HCT116 (cell line): ENCODE measurements at regions of chr2 and their contacts with region 1.

Region 1: GRCh38 chr2:188524519-188525113 is 232.9 kb downstream of the GULP1 start:
- DNase-seq: peak; percentile 22
- ATAC-seq: no peak
- H3K4me3 ChIP-seq: no peak overlapping the region
- H3K27ac ChIP-seq: no peak overlapping the region
- H3K4me1 ChIP-seq: no peaks in the 10 kb centered on the region
- H3K27me3 ChIP-seq: no peaks in the 10 kb centered on the region
- CTCF ChIP-seq: peak; percentile 54 to 64 (median 56); a peak in 5 of 6 replicates
- POLR2A ChIP-seq: no peak
- RAD21 ChIP-seq: peak; percentile 77

Region 2: DNA sequence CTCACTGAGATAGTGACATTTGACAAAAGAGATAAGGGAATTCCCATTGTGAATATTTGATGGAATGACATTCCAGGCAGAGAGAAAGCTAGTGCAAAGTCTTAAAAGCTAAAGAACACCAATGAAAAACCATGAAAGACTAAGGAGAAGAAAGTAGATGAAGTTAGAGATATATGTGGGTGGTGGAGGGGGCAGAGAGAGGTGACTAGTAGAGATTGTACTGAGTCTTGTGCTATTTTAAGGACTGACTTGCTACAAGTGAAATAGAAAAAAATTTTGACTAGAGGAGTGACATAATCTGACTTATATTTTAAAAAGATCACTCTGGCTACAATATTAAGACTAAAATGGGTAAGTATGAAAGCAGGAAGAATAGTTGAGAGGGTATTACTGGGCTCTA is 268.2 kb before region 1 on chr2:
- CTCF ChIA-PET with region 1: no interaction called
- POLR2A ChIA-PET with region 1: no interaction called
- RAD21 ChIA-PET with region 1: no interaction called
- intact Hi-C with region 1: no loop called
- DNase-seq: no peak
- ATAC-seq: no peak
- H3K4me3 ChIP-seq: no peak overlapping the region
- H3K27ac ChIP-seq: no peak overlapping the region
- H3K4me1 ChIP-seq: no peaks in the 10 kb centered on the region
- H3K27me3 ChIP-seq: no peaks in the 10 kb centered on the region
- CTCF ChIP-seq: no peak
- POLR2A ChIP-seq: no peak
- RAD21 ChIP-seq: no peak

Region 3: GRCh38 chr2:188360485-188361255 is 163.9 kb before region 1 on chr2:
- CTCF ChIA-PET with region 1: no interaction called
- POLR2A ChIA-PET with region 1: no interaction called
- RAD21 ChIA-PET with region 1: no interaction called
- intact Hi-C with region 1: no loop called
- DNase-seq: no peak
- ATAC-seq: no peak
- H3K4me3 ChIP-seq: no peak overlapping the region
- H3K27ac ChIP-seq: no peak overlapping the region
- H3K4me1 ChIP-seq: no peaks in the 10 kb centered on the region
- H3K27me3 ChIP-seq: no peaks in the 10 kb centered on the region
- CTCF ChIP-seq: no peak
- POLR2A ChIP-seq: no peak
- RAD21 ChIP-seq: no peak

Region 4: GRCh38 chr2:188788621-188789020 is 264.0 kb after region 1 on chr2:
- CTCF ChIA-PET with region 1: no interaction called
- POLR2A ChIA-PET with region 1: no interaction called
- RAD21 ChIA-PET with region 1: no interaction called
- intact Hi-C with region 1: loop called (anchors 10 kb)
- DNase-seq: peak; percentile 57
- ATAC-seq: peak; percentile 59
- H3K4me3 ChIP-seq: peak overlapping the region in 1 of 2 experiments; percentile 23; a peak in 1 of 4 replicates
- H3K27ac ChIP-seq: no peak overlapping the region
- H3K4me1 ChIP-seq: peaks cover 17 to 33% of the 10 kb centered on the region in 2 experiments
- H3K27me3 ChIP-seq: no peaks in the 10 kb centered on the region
- CTCF ChIP-seq: no peak
- POLR2A ChIP-seq: no peak
- RAD21 ChIP-seq: no peak

Region 5: DNA sequence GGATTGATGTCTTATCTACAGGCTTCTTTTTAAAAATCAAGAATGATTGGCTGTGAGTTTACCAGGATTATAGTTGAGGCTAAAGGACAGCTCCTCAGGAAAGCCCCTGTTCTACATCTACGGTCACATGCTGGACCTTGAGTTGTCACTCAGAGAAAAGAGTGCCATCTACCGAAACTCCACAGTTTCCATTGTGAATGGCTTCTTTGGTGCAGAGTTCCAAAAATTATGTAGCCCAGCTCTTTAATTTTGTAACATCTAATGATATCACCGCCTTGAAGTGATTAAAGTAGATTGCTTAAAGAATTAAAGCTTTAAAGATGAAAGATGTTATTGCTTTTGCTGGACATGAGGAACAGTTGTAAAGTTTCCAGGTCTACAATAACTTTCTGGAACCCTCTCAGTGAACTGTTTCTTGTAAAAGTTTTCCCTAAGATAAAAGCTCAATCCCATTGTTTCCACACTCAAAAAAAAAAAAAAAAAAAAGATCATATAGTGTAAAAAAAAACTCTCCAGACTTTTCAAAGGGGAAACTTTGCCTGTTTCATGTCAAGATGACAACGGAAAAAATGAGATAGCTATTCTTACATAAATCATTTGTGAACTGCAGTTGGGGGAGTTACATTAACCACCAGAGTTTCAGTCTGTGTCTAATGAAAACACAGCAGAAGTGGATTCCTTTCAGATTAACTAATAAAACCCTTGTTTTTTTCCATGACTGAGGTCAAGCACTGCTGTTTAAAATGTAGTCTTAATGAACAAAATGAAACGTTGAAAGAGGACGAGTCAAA is 453.9 kb after region 1 on chr2:
- CTCF ChIA-PET with region 1: interaction called, 96 read pairs
- POLR2A ChIA-PET with region 1: no interaction called
- RAD21 ChIA-PET with region 1: interaction called, 7 to 8 read pairs
- intact Hi-C with region 1: loop called (anchors 2 kb)
- DNase-seq: peak; percentile 31
- ATAC-seq: peak; percentile 92
- H3K4me3 ChIP-seq: no peak overlapping the region; a peak in 1 of 4 replicates
- H3K27ac ChIP-seq: no peak overlapping the region
- H3K4me1 ChIP-seq: peaks cover 0 to 18% of the 10 kb centered on the region in 2 experiments; a peak in 2 of 4 replicates
- H3K27me3 ChIP-seq: no peaks in the 10 kb centered on the region
- CTCF ChIP-seq: peak; percentile 42 to 57 (median 46); a peak in 4 of 6 replicates
- POLR2A ChIP-seq: no peak
- RAD21 ChIP-seq: peak; percentile 78

Region 6: DNA sequence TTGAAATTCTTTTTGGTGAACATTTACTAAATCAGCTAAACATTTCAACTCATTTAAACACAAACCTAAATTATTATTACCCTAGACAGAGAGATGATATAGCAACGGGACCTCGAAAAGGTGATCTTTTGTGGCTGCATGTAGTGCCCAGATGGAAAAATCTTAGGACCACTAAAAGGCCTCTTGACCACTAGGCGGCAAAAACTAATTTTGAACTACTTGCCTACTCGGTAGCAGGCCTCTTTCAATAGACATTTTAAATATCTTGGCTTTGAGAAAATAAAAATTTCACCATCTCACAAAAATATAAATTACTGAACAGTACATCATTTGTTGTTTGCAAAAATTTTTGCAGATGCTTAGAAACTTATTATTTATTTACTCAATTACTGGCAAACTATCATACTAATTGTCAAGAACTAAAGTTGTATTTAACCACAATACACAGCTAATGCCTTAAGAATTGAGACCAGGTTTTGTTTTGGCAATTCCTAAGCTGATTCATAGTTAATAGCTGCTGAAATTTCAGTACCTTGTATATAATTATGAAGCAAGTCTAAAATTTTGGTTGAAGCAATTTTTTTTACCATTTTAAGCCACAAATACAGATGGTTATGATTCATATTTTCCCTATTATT is 458.9 kb after region 1 on chr2:
- CTCF ChIA-PET with region 1: interaction called, 96 read pairs
- POLR2A ChIA-PET with region 1: no interaction called
- RAD21 ChIA-PET with region 1: interaction called, 7 to 8 read pairs
- intact Hi-C with region 1: loop called (anchors 2 kb)
- DNase-seq: peak; percentile 34
- ATAC-seq: peak; percentile 63
- H3K4me3 ChIP-seq: no peak overlapping the region
- H3K27ac ChIP-seq: no peak overlapping the region
- H3K4me1 ChIP-seq: peaks cover 0 to 7% of the 10 kb centered on the region in 2 experiments; a peak in 1 of 4 replicates
- H3K27me3 ChIP-seq: no peaks in the 10 kb centered on the region
- CTCF ChIP-seq: peak; percentile 10 to 59 (median 44); a peak in 3 of 6 replicates
- POLR2A ChIP-seq: no peak
- RAD21 ChIP-seq: 0 out of 2 replicates have a peak, but pooled peaks have one; percentile 23

Region 7: DNA sequence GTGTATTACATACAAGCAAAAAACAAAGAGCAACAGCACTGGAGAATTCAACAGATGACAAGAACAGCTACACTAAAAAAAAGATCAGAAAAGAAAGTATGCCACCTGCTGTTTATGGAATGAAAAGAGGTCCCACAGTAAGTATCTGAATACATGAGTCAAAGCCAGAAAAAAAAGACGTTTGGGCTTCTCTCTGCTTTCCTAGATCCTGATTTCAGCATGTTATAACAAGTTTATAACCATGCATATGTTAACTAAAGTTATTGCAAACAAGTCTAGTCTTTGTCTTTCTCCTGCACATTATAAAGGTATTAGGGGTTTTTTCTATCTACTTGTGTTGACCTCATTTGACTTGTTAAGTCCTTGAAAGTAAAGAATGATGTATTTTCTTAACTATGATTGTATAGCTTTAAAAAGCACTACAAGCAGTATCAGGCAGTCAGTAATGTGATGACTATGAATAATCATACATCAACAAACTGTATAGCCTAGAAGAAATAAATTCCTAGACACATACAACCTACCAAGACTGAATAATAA is 763.4 kb after region 1 on chr2:
- CTCF ChIA-PET with region 1: interaction called, 18 read pairs
- POLR2A ChIA-PET with region 1: no interaction called
- RAD21 ChIA-PET with region 1: no interaction called
- intact Hi-C with region 1: loop called (anchors 2 kb)
- DNase-seq: peak; percentile 34
- ATAC-seq: peak; percentile 76
- H3K4me3 ChIP-seq: no peak overlapping the region
- H3K27ac ChIP-seq: no peak overlapping the region
- H3K4me1 ChIP-seq: no peaks in the 10 kb centered on the region
- H3K27me3 ChIP-seq: no peaks in the 10 kb centered on the region
- CTCF ChIP-seq: peak; percentile 38 to 89 (median 57); a peak in 5 of 6 replicates
- POLR2A ChIP-seq: no peak
- RAD21 ChIP-seq: peak; percentile 82

Region 8: GRCh38 chr2:189347540-189347939 is 822.9 kb after region 1 on chr2:
- CTCF ChIA-PET with region 1: interaction called, 3 read pairs
- POLR2A ChIA-PET with region 1: no interaction called
- RAD21 ChIA-PET with region 1: no interaction called
- intact Hi-C with region 1: loop called (anchors 1 kb)
- DNase-seq: peak; percentile 53
- ATAC-seq: peak; percentile 70
- H3K4me3 ChIP-seq: no peak overlapping the region
- H3K27ac ChIP-seq: no peak overlapping the region
- H3K4me1 ChIP-seq: peaks cover 3 to 14% of the 10 kb centered on the region in 2 experiments; a peak in 2 of 4 replicates
- H3K27me3 ChIP-seq: no peaks in the 10 kb centered on the region
- CTCF ChIP-seq: peak in 2 of 3 experiments; percentile 28 to 52; a peak in 2 of 6 replicates
- POLR2A ChIP-seq: no peak
- RAD21 ChIP-seq: peak; percentile 80